AG04449 (cell line): ENCODE measurements at regions of chr1 and their contacts with region 1.

Region 1: GRCh38 chr1:18941221-18942141 is 15.0 kb downstream of the IFFO2 start:
- DNase-seq: no peak
- H3K4me3 ChIP-seq: no peak overlapping the region
- CTCF ChIP-seq: no peak

Region 2: GRCh38 chr1:18956369-18957135 is 15.1 kb after region 1 on chr1 and contains the start of gene IFFO2:
- CTCF ChIA-PET with region 1: interaction called, 11 read pairs
- POLR2A ChIA-PET with region 1: interaction called, 7 read pairs
- DNase-seq: no peak
- H3K4me3 ChIP-seq: peak within 1 kb of the TSS; percentile 75
- CTCF ChIP-seq: no peak

Region 3: GRCh38 chr1:18965206-18966173 is 24.0 kb after region 1 on chr1:
- CTCF ChIA-PET with region 1: interaction called, 10 read pairs
- POLR2A ChIA-PET with region 1: no interaction called
- DNase-seq: no peak
- H3K4me3 ChIP-seq: no peak overlapping the region
- CTCF ChIP-seq: no peak

Region 4: DNA sequence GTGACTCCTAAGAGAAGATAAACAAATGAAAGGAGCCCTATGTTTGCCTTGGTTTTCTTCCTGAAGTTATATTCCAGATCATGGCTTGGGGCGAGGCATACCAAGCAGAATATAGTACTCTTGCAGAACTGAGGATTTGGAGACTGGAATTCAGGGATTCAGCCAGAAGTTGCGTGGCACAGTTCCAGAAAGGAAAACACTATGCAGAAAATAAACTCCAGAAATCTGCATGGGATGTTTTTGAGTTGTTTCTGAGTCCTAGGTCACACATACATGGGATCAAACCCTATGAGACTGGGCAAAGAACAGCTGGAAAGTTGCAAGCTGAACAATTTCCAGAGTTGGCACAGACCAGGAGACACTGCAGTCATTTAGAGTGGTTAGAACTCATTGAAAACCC is 57.9 kb after region 1 on chr1:
- CTCF ChIA-PET with region 1: no interaction called
- POLR2A ChIA-PET with region 1: no interaction called
- DNase-seq: no peak
- H3K4me3 ChIP-seq: no peak overlapping the region
- CTCF ChIP-seq: no peak